ENCODE measurements at regions of chr21 and their contacts with region 1.

Region 1: DNA sequence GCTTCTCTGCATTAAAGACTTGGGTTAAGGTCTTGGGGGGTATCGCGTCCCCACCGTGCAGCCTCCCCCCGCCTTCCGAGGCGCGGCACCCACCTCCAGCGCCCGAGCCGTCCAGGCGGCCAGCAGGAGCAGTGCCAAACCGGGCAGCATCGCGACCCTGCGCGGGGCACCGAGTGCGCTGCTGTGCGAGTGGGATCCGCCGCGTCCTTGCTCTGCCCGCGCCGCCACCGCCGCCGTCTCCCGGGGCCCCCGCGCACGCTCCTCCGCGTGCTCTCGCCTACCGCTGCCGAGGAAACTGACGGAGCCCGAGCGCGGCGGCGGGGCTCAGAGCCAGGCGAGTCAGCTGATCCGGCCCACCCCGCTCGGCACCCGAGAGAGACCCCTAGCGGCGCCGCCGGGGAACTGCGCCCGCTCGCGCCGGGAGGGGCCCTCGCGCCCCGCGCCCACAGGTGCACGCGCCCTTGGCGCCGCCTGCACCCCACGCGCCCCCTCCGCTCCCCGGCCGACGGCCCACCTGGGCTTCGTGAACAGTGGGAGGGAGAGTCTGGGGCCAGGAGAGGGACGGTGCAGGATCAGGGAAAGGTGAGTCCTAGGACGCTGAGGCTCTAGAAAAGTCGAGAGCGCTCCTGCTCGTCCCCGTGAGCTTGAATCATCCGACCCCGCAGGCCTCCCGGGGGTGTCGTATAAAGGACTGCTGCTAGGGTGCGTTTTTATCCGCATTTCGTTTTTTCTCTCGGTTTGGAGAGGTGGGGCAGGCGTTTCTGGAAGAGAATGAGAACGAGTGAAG is at the start of gene APP:
- DNase-seq: peak; percentile 70
- ATAC-seq: peak; percentile 79
- H3K4me3 ChIP-seq: peak within 1 kb of the TSS; percentile 62
- H3K27ac ChIP-seq: peak within 1 kb of the TSS; percentile 89
- H3K4me1 ChIP-seq: peaks cover 10% of the 10 kb centered on the region
- H3K27me3 ChIP-seq: no peaks in the 10 kb centered on the region
- CTCF ChIP-seq: peak; percentile 83
- POLR2A ChIP-seq: peak; percentile 58
- RAD21 ChIP-seq: peak; percentile 71
- total RNA-seq, gene APP: 191 and 196 TPM in 2 replicates

Region 2: GRCh38 chr21:25734904-25735645 is 435.6 kb before region 1 on chr21 and contains the starts of genes ATP5PF and GABPA:
- CTCF ChIA-PET with region 1: no interaction called
- POLR2A ChIA-PET with region 1: no interaction called
- dilution Hi-C with region 1: no loop called
- in situ Hi-C with region 1: no loop called
- intact Hi-C with region 1: loop called (anchors 5 kb)
- DNase-seq: peak; percentile 99
- ATAC-seq: peak; percentile 88
- H3K4me3 ChIP-seq: peak within 1 kb of the TSS; percentile 53
- H3K27ac ChIP-seq: peak within 1 kb of the TSS; percentile 99
- H3K4me1 ChIP-seq: no peaks in the 10 kb centered on the region
- H3K27me3 ChIP-seq: no peaks in the 10 kb centered on the region
- CTCF ChIP-seq: no peak
- POLR2A ChIP-seq: peak; percentile 62
- RAD21 ChIP-seq: no peak
- total RNA-seq, gene ATP5PF: 74.7 and 76.0 TPM in 2 replicates
- total RNA-seq, gene GABPA: 17.0 and 26.4 TPM in 2 replicates

Region 3: GRCh38 chr21:25887166-25887565 is 283.5 kb before region 1 on chr21:
- CTCF ChIA-PET with region 1: no interaction called
- POLR2A ChIA-PET with region 1: no interaction called
- dilution Hi-C with region 1: no loop called
- in situ Hi-C with region 1: loop called (anchors 5 kb)
- intact Hi-C with region 1: loop called (anchors 1 kb)
- DNase-seq: no peak
- ATAC-seq: no peak
- H3K4me3 ChIP-seq: no peak overlapping the region
- H3K27ac ChIP-seq: no peak overlapping the region
- H3K4me1 ChIP-seq: no peaks in the 10 kb centered on the region
- H3K27me3 ChIP-seq: no peaks in the 10 kb centered on the region
- CTCF ChIP-seq: 0 out of 2 replicates have a peak, but pooled peaks have one; percentile 6
- POLR2A ChIP-seq: no peak
- RAD21 ChIP-seq: no peak

Region 4: DNA sequence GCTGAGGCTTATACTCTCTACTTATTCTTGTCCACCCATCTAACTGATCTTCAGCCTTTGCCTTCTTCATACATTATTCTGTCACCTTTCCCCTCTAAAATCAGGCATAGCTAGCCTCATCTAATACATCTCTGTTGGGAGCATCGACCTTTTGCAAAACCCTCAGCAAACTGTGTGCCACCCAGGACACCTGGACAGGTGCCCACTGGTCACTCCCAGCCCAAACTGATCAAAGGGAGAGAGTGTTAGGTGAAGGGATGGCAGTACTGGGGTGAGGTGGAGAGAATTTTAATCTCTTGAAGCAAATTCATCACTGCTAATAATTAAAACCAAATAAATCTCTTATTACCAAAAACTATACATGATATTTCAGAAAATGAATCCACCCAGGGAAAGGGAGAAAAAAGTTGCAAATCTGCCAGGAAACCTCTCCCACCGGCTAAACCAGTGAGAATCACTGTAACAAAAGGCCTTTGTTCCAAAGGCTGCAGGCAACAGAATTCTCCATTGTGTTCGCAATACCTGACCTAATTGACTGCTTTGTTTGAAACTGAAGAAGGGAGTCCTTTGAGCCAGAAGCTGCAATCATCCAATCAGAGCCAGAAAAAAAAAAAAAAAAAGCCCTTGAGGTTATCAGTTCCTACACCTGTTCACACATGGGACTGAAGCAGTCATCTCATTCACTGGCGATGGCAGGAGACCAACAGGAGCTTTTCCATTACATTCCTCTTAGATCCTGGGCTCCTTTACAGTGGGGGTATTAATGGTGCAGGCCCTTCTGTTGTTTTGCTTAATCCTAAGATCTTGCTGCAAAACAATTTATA is 172.7 kb before region 1 on chr21:
- CTCF ChIA-PET with region 1: no interaction called
- POLR2A ChIA-PET with region 1: no interaction called
- dilution Hi-C with region 1: no loop called
- in situ Hi-C with region 1: no loop called
- intact Hi-C with region 1: no loop called
- DNase-seq: no peak
- ATAC-seq: no peak
- H3K4me3 ChIP-seq: no peak overlapping the region
- H3K27ac ChIP-seq: no peak overlapping the region
- H3K4me1 ChIP-seq: no peaks in the 10 kb centered on the region
- H3K27me3 ChIP-seq: no peaks in the 10 kb centered on the region
- CTCF ChIP-seq: no peak
- POLR2A ChIP-seq: no peak
- RAD21 ChIP-seq: no peak

Region 5: GRCh38 chr21:26070822-26071425 is 99.7 kb before region 1 on chr21:
- CTCF ChIA-PET with region 1: interaction called, 3 read pairs
- POLR2A ChIA-PET with region 1: no interaction called
- dilution Hi-C with region 1: no loop called
- in situ Hi-C with region 1: no loop called
- intact Hi-C with region 1: loop called (anchors 2 kb)
- DNase-seq: peak; percentile 45
- ATAC-seq: peak; percentile 64
- H3K4me3 ChIP-seq: peak overlapping the region; percentile 8; the same call in 1 of the 2 replicates
- H3K27ac ChIP-seq: peak overlapping the region; percentile 23; the same call in 1 of the 2 replicates
- H3K4me1 ChIP-seq: peaks cover 6% of the 10 kb centered on the region
- H3K27me3 ChIP-seq: no peaks in the 10 kb centered on the region
- CTCF ChIP-seq: no peak
- POLR2A ChIP-seq: no peak
- RAD21 ChIP-seq: no peak

Region 6: GRCh38 chr21:26127918-26128317 is 42.7 kb before region 1 on chr21:
- CTCF ChIA-PET with region 1: interaction called, 3 read pairs
- POLR2A ChIA-PET with region 1: no interaction called
- dilution Hi-C with region 1: no loop called
- in situ Hi-C with region 1: no loop called
- intact Hi-C with region 1: loop called (anchors 2 kb)
- DNase-seq: peak; percentile 69
- ATAC-seq: peak; percentile 33
- H3K4me3 ChIP-seq: no peak overlapping the region
- H3K27ac ChIP-seq: no peak overlapping the region
- H3K4me1 ChIP-seq: peaks cover 17% of the 10 kb centered on the region
- H3K27me3 ChIP-seq: no peaks in the 10 kb centered on the region
- CTCF ChIP-seq: no peak
- POLR2A ChIP-seq: no peak
- RAD21 ChIP-seq: no peak

Region 7: DNA sequence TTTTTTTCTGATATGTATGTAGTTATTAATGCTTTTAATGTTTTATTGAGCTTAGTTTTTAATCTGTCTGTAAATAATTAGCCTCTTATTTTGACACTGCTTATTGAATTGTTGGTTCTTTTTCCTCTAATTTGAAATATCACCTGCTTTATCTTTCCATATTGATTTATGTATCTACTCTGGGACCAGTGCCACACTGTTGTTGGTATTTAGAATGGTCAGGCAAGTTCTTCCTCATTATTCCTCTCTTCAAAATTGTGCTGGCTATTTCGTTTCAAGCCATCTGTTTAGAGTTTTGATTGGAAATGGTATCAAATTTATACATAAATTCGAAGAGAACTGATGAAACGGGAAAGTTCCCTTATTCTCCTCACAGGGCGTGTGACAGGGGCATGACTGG is 96.7 kb after region 1 on chr21:
- CTCF ChIA-PET with region 1: no interaction called
- POLR2A ChIA-PET with region 1: no interaction called
- dilution Hi-C with region 1: no loop called
- in situ Hi-C with region 1: no loop called
- intact Hi-C with region 1: no loop called
- DNase-seq: no peak
- ATAC-seq: no peak
- H3K4me3 ChIP-seq: no peak overlapping the region
- H3K27ac ChIP-seq: no peak overlapping the region
- H3K4me1 ChIP-seq: no peaks in the 10 kb centered on the region
- H3K27me3 ChIP-seq: no peaks in the 10 kb centered on the region
- CTCF ChIP-seq: no peak
- POLR2A ChIP-seq: no peak
- RAD21 ChIP-seq: no peak

Measured in IMR-90 (cell line).